ENCODE measurements at regions of chr19 and their contacts with region 1.

Region 1: DNA sequence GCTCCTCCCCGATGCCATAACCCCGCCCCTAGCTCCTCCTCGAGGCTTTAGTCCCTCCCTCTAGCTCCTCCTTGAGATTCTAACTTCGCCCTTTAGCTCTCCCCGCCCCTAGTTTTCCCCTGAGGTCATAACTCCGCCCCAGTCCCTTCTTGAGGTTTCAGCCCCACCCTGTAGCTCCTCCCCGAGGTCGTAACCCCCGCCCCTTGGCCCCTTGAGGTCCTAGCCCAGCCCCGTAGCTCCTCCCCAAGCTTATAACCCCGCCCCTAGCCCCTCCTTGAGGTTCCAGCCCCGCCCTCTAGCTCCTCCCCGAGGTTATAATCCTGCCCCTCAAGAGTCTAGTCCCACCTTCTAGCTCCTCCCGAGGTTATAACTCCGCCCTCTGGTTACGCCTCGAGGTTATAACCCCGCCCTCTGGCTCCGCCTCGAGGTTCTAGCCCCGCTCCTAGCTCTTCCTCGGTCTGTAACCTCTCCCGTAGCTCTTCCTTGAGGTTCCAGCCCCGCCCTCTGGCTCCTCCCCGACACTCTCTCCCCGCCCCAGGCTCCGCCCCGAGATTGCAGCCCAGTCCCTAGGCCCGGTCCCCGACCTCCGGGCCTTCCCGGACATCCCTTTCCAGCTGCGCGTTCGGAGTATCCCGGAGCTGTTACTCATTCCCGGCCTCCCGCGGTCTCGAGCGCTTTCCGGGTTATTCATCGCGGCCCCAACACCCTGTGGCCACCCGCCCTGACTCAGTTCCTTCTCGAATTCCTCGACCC is 1.4 kb downstream of the PLAUR start:
- DNase-seq: peak; percentile 99
- ATAC-seq: peak; percentile 90
- H3K4me3 Mint-ChIP-seq: peak overlapping the region; percentile 85
- H3K27ac Mint-ChIP-seq: peak overlapping the region; percentile 71
- H3K4me1 Mint-ChIP-seq: peaks cover 38% of the 10 kb centered on the region
- H3K27me3 Mint-ChIP-seq: no peaks in the 10 kb centered on the region
- CTCF ChIP-seq: no peak

Region 2: GRCh38 chr19:43651758-43652545 is 16.6 kb before region 1 on chr19:
- CTCF ChIA-PET with region 1: interaction called, 10 read pairs
- POLR2A ChIA-PET with region 1: no interaction called
- intact Hi-C with region 1: no loop called
- DNase-seq: peak; percentile 60
- ATAC-seq: peak; percentile 67
- H3K4me3 Mint-ChIP-seq: no peak overlapping the region
- H3K27ac Mint-ChIP-seq: no peak overlapping the region
- H3K4me1 Mint-ChIP-seq: no peaks in the 10 kb centered on the region
- H3K27me3 Mint-ChIP-seq: no peaks in the 10 kb centered on the region
- CTCF ChIP-seq: peak; percentile 62

Region 3: GRCh38 chr19:43715776-43716175 is 47.2 kb after region 1 on chr19 and contains the start of gene IRGC:
- CTCF ChIA-PET with region 1: no interaction called
- POLR2A ChIA-PET with region 1: no interaction called
- intact Hi-C with region 1: no loop called
- DNase-seq: no peak
- ATAC-seq: no peak
- H3K4me3 Mint-ChIP-seq: no peak within 1 kb of the TSS
- H3K27ac Mint-ChIP-seq: no peak within 1 kb of the TSS
- H3K4me1 Mint-ChIP-seq: no peaks in the 10 kb centered on the region
- H3K27me3 Mint-ChIP-seq: peaks cover 5% of the 10 kb centered on the region
- CTCF ChIP-seq: no peak
- total RNA-seq, gene IRGC: not detected

Region 4: DNA sequence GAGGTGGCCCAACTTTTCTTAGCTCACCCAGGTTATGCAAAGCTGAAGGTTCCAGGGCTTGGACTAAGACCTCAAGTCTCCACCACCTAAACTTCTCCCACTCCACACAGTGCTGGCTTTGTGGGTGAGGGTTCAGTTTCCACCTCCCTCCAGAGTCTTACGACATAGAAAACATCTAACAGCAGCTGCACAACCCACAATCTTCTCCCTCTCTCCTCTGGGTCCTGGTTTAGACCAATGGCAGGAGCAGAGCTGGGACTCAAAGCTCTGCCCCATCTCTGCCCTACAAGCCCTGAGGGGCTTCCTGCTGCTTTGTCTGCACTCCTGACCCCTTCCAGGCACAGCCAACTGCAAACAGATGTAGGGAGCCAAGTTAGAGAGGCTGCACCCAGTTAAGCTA is 63.3 kb after region 1 on chr19:
- CTCF ChIA-PET with region 1: no interaction called
- POLR2A ChIA-PET with region 1: no interaction called
- intact Hi-C with region 1: no loop called
- DNase-seq: no peak
- ATAC-seq: no peak
- H3K4me3 Mint-ChIP-seq: no peak overlapping the region
- H3K27ac Mint-ChIP-seq: no peak overlapping the region
- H3K4me1 Mint-ChIP-seq: no peaks in the 10 kb centered on the region
- H3K27me3 Mint-ChIP-seq: no peaks in the 10 kb centered on the region
- CTCF ChIP-seq: no peak

Region 5: GRCh38 chr19:43765109-43765876 is 96.7 kb after region 1 on chr19:
- CTCF ChIA-PET with region 1: interaction called, 24 read pairs
- POLR2A ChIA-PET with region 1: interaction called, 3 read pairs
- intact Hi-C with region 1: no loop called
- DNase-seq: peak; percentile 95
- ATAC-seq: peak; percentile 83
- H3K4me3 Mint-ChIP-seq: peak overlapping the region; percentile 43
- H3K27ac Mint-ChIP-seq: peak overlapping the region; percentile 95
- H3K4me1 Mint-ChIP-seq: peaks cover 66% of the 10 kb centered on the region
- H3K27me3 Mint-ChIP-seq: no peaks in the 10 kb centered on the region
- CTCF ChIP-seq: no peak

Measured in activated CD8-positive, alpha-beta T cell treated with anti-CD3 and anti-CD28 coated beads for 36 hours (primary cell).